Activated CD4-positive, alpha-beta memory T cell treated with anti-CD3 and anti-CD28 coated beads for 36 hours (primary cell): ENCODE measurements at regions of chr10 and their contacts with region 1.

Region 1: DNA sequence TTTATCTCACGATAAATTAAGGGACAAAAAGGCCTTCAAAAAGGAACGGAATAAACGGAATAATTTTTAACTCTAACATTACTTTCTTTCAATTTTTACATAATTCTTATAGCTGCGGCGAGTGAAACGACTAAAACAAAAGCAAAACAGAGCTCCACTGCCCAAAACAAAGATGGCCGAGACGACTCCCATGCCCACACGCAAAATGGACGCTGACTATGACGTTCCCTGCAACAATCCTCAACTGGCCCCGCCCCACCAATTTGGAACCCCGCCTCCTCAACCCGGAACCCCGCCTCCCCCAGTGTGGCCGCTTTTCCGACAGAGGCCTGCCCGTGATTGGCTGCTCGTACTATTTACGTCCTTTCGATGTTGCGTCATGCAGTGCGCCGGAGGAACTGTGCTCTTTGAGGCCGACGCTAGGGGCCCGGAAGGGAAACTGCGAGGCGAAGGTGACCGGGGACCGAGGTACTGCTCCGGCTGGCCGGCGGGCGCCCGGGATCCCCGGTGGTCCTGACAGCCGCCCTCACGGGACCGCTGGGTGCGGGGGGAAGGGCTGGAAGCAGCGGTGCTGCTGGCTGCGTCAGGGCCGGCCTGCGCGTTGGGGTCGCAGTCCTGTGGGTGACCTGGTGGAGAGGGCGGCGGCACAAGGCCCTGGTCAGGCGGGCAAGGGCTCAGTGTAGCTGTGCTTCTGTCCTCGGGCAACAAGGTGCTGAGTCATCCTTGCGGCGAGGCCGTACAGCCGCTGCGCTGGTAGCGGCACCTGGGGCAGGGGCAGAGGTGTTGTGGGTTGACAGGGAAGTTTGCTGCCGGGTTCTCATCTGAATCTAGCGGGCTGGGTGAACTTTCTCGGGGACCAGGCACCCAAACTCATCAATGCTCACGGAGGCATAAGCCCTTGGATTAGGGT is at the start of gene GHITM:
- DNase-seq: peak; percentile 100
- H3K4me3 Mint-ChIP-seq: peak within 1 kb of the TSS; percentile 97
- H3K27ac Mint-ChIP-seq: peak within 1 kb of the TSS; percentile 95
- H3K4me1 Mint-ChIP-seq: peaks cover 34% of the 10 kb centered on the region
- H3K27me3 Mint-ChIP-seq: no peaks in the 10 kb centered on the region
- total RNA-seq, gene GHITM: 192 to 197 TPM

Region 2: GRCh38 chr10:83680470-83680891 is 458.9 kb before region 1 on chr10:
- CTCF ChIA-PET with region 1: no interaction called
- POLR2A ChIA-PET with region 1: no interaction called
- intact Hi-C with region 1: loop called (anchors 1 kb)
- DNase-seq: peak; percentile 54
- H3K4me3 Mint-ChIP-seq: no peak overlapping the region
- H3K27ac Mint-ChIP-seq: no peak overlapping the region
- H3K4me1 Mint-ChIP-seq: peaks cover 28% of the 10 kb centered on the region
- H3K27me3 Mint-ChIP-seq: no peaks in the 10 kb centered on the region

Region 3: GRCh38 chr10:84054743-84055142 is 84.6 kb before region 1 on chr10:
- CTCF ChIA-PET with region 1: no interaction called
- POLR2A ChIA-PET with region 1: no interaction called
- intact Hi-C with region 1: no loop called
- DNase-seq: no peak
- H3K4me3 Mint-ChIP-seq: no peak overlapping the region
- H3K27ac Mint-ChIP-seq: no peak overlapping the region
- H3K4me1 Mint-ChIP-seq: no peaks in the 10 kb centered on the region
- H3K27me3 Mint-ChIP-seq: peaks cover 9% of the 10 kb centered on the region

Region 4: DNA sequence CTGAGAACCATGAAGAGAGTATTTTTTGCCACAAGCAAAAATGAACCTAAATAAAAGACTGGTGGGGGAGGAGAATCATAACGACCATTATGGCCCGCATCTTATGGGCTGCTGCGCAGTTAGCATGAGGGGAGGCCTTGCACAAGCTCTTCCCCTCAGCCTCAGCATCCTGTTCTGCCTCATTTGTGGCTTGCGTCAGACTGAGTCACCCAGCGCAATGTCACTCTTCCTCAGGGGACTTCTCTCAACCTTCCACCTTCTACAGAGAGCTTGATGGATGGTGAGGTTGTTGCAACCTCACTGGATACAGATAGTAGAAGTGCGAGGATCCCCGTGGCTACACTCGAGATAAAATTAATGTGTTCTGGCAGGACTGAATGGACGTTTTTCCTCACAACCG is 17.4 kb after region 1 on chr10:
- CTCF ChIA-PET with region 1: interaction called, 3 read pairs
- POLR2A ChIA-PET with region 1: interaction called, 6 read pairs
- intact Hi-C with region 1: loop called (anchors 1 kb)
- DNase-seq: peak; percentile 59
- H3K4me3 Mint-ChIP-seq: no peak overlapping the region
- H3K27ac Mint-ChIP-seq: peak overlapping the region; percentile 29
- H3K4me1 Mint-ChIP-seq: peaks cover 34% of the 10 kb centered on the region
- H3K27me3 Mint-ChIP-seq: no peaks in the 10 kb centered on the region

Region 5: GRCh38 chr10:84194424-84195040 is 55.2 kb after region 1 on chr10 and contains the start of gene CDHR1:
- CTCF ChIA-PET with region 1: interaction called, 6 read pairs
- POLR2A ChIA-PET with region 1: no interaction called
- intact Hi-C with region 1: loop called (anchors 5 kb)
- DNase-seq: peak; percentile 57
- H3K4me3 Mint-ChIP-seq: peak within 1 kb of the TSS; percentile 34
- H3K27ac Mint-ChIP-seq: no peak within 1 kb of the TSS
- H3K4me1 Mint-ChIP-seq: peaks cover 13% of the 10 kb centered on the region
- H3K27me3 Mint-ChIP-seq: peaks cover 30% of the 10 kb centered on the region
- total RNA-seq, gene CDHR1: 0.40 to 0.75 TPM

Region 6: DNA sequence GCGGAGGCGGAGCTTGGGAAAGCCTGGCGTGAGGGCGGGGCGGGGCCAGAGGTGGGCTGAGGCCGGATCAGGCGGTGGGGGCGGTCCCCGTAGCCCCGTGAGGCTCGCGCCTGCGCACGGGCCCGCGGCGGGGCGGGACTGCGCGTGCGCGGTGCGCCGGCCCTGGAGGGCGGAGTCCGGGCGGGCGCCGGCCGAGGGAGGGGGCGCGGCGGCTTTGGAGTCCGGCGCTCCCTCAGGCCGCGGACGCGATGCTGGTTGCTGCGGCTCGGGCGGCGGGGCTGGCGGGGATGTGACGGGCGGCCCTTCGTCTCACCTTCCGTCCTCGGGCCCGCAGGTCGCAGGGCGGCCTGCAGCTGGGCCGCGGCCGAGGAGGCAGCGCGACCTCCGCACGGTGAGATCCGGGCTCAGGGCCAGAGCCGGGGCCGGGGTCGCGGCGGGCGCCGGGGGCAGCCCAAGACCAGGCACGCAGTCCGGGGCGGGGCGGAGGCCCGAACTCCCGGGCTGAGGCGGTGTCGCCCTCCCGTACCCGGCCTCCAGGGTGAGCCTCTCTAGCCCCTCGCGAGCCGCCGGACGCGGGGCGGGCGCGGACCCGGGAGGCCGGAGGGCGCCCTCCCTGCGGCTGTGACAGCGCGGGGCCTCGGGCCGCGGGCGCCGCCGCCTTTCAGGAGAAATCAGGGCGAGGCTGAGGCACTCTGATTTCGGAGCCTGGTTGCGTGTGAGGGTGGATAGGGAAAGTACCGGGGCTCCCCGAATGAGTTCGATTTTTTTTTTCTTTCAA is 189.2 kb after region 1 on chr10 and contains the start of gene CCSER2:
- CTCF ChIA-PET with region 1: interaction called, 3 read pairs
- POLR2A ChIA-PET with region 1: interaction called, 3 read pairs
- intact Hi-C with region 1: loop called (anchors 1 kb)
- DNase-seq: peak; percentile 98
- H3K4me3 Mint-ChIP-seq: peak within 1 kb of the TSS; percentile 88
- H3K27ac Mint-ChIP-seq: peak within 1 kb of the TSS; percentile 98
- H3K4me1 Mint-ChIP-seq: peaks cover 30% of the 10 kb centered on the region
- H3K27me3 Mint-ChIP-seq: no peaks in the 10 kb centered on the region
- total RNA-seq, gene CCSER2: 69.8 to 73.5 TPM

Region 7: GRCh38 chr10:84397735-84398144 is 258.4 kb after region 1 on chr10:
- CTCF ChIA-PET with region 1: no interaction called
- POLR2A ChIA-PET with region 1: no interaction called
- intact Hi-C with region 1: no loop called
- DNase-seq: no peak
- H3K4me3 Mint-ChIP-seq: no peak overlapping the region
- H3K27ac Mint-ChIP-seq: peak overlapping the region; percentile 6
- H3K4me1 Mint-ChIP-seq: peaks cover 27% of the 10 kb centered on the region
- H3K27me3 Mint-ChIP-seq: no peaks in the 10 kb centered on the region